Mammary epithelial cell (primary cell): ENCODE measurements at regions of chr15 and their contacts with region 1.

Region 1: DNA sequence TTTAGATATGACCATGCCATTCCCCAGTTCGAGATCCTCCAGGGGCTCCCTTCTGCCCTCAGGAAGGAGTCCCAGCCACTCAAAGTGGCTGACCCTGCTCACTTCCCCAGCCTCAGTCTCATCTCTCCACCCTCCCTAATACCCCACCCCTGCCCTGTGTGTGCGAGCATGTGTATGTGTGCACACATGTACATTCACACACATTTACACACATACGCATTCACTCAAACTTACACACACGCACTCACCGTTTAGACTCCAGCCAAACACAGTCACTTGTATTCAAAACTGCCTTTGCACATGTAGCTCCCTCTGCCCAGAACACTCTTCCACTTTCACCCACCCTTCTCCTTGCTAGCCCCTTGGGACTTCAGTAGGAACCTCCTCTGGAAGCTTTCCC is 11.4 kb downstream of the PLA2G4E start:
- DNase-seq: no peak
- H3K4me3 ChIP-seq: no peak overlapping the region
- H3K27ac ChIP-seq: no peak overlapping the region
- H3K4me1 ChIP-seq: peaks cover 12% of the 10 kb centered on the region
- H3K27me3 ChIP-seq: no peaks in the 10 kb centered on the region
- CTCF ChIP-seq: no peak

Region 2: GRCh38 chr15:42050484-42051255 is 41.2 kb after region 1 on chr15:
- CTCF ChIA-PET with region 1: no interaction called
- dilution Hi-C with region 1: loop called (anchors 5 kb)
- in situ Hi-C with region 1: no loop called
- intact Hi-C with region 1: no loop called
- DNase-seq: no peak
- H3K4me3 ChIP-seq: no peak overlapping the region
- H3K27ac ChIP-seq: no peak overlapping the region
- H3K4me1 ChIP-seq: no peaks in the 10 kb centered on the region
- H3K27me3 ChIP-seq: no peaks in the 10 kb centered on the region
- CTCF ChIP-seq: no peak